B cell (primary cell): ENCODE measurements at regions of chr1 and their contacts with region 1.

Region 1: GRCh38 chr1:25858906-25859789 is at the start of gene AUNIP:
- DNase-seq: peak; percentile 93
- ATAC-seq: peak; percentile 99
- H3K4me3 ChIP-seq: peak within 1 kb of the TSS; percentile 65 to 91 (median 77)
- H3K4me3 Mint-ChIP-seq: peak within 1 kb of the TSS; percentile 96
- H3K27ac ChIP-seq: peak within 1 kb of the TSS; percentile 76 to 86
- H3K27ac Mint-ChIP-seq: peak within 1 kb of the TSS; percentile 95
- H3K4me1 ChIP-seq: peaks cover 22 to 30% of the 10 kb centered on the region in 2 donors
- H3K4me1 Mint-ChIP-seq: peaks cover 26% of the 10 kb centered on the region
- H3K27me3 ChIP-seq: no peaks in the 10 kb centered on the region
- H3K27me3 Mint-ChIP-seq: no peaks in the 10 kb centered on the region
- CTCF ChIP-seq: no peak
- total RNA-seq, gene AUNIP: 0.27 TPM in 1 of 2 replicates, not detected in the other

Region 2: DNA sequence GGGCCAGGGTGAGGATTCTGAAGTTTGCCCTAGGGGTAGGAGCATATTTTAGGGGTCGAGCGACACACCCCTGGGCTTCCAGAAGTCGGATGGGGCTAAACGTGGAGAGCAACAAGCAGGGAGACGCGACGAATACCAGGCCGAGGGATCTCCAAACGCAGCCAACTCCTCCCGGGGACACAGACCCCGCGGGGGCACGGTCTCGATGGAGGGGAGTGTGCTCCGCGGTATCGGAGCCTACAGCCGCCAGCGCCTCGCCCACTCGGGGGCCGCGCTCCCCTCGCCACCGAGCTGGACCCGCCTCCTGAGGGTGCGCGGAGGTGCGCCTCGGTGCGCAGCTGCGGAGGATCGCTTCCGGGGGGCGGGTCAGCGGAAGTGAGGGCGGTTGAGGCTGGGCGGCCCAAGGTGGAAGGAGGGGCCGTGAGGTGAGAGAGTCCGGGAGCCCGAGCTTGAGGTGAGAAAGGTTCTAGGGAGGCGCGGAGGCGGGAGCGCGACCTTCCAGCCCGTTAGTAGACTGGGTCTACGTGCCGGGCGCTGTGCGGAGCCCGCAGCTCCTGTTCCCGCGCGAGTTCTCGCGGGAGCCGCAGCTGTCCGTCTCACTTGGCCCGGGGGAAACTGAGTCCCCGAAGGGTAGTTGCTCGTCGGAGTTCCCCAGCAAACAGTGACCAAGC is 39.4 kb before region 1 on chr1 and contains the start of gene MTFR1L:
- CTCF ChIA-PET with region 1: no interaction called
- POLR2A ChIA-PET with region 1: interaction called, 8 read pairs
- intact Hi-C with region 1: loop called (anchors 1 kb)
- DNase-seq: peak; percentile 94
- ATAC-seq: peak; percentile 93
- H3K4me3 ChIP-seq: peak within 1 kb of the TSS; percentile 66 to 99 (median 84)
- H3K4me3 Mint-ChIP-seq: peak within 1 kb of the TSS; percentile 95
- H3K27ac ChIP-seq: peak within 1 kb of the TSS; percentile 76 to 84
- H3K27ac Mint-ChIP-seq: peak within 1 kb of the TSS; percentile 94
- H3K4me1 ChIP-seq: peaks cover 18 to 24% of the 10 kb centered on the region in 2 donors
- H3K4me1 Mint-ChIP-seq: peaks cover 29% of the 10 kb centered on the region
- H3K27me3 ChIP-seq: no peaks in the 10 kb centered on the region
- H3K27me3 Mint-ChIP-seq: no peaks in the 10 kb centered on the region
- CTCF ChIP-seq: no peak
- total RNA-seq, gene MTFR1L: 40.9 and 41.5 TPM in 2 replicates

Region 3: GRCh38 chr1:25837262-25837875 is 21.8 kb before region 1 on chr1:
- CTCF ChIA-PET with region 1: no interaction called
- POLR2A ChIA-PET with region 1: no interaction called
- intact Hi-C with region 1: no loop called
- DNase-seq: no peak
- ATAC-seq: no peak
- H3K4me3 ChIP-seq: no peak overlapping the region
- H3K4me3 Mint-ChIP-seq: no peak overlapping the region
- H3K27ac ChIP-seq: no peak overlapping the region
- H3K27ac Mint-ChIP-seq: no peak overlapping the region
- H3K4me1 ChIP-seq: no peaks in the 10 kb centered on the region
- H3K4me1 Mint-ChIP-seq: no peaks in the 10 kb centered on the region
- H3K27me3 ChIP-seq: no peaks in the 10 kb centered on the region
- H3K27me3 Mint-ChIP-seq: no peaks in the 10 kb centered on the region
- CTCF ChIP-seq: peak; percentile 25

Region 4: GRCh38 chr1:25874934-25875855 is 16.0 kb after region 1 on chr1 and contains the start of gene PAQR7:
- CTCF ChIA-PET with region 1: interaction called, 4 read pairs
- POLR2A ChIA-PET with region 1: no interaction called
- intact Hi-C with region 1: loop called (anchors 1 kb)
- DNase-seq: peak; percentile 70
- ATAC-seq: peak; percentile 87
- H3K4me3 ChIP-seq: peak within 1 kb of the TSS in 4 of 5 experiments; percentile 50 to 70 (median 62)
- H3K4me3 Mint-ChIP-seq: peak within 1 kb of the TSS; percentile 90
- H3K27ac ChIP-seq: peak within 1 kb of the TSS in 1 of 2 donors; percentile 40
- H3K27ac Mint-ChIP-seq: peak within 1 kb of the TSS; percentile 78
- H3K4me1 ChIP-seq: peaks cover 21 to 41% of the 10 kb centered on the region in 2 donors
- H3K4me1 Mint-ChIP-seq: peaks cover 20% of the 10 kb centered on the region
- H3K27me3 ChIP-seq: no peaks in the 10 kb centered on the region
- H3K27me3 Mint-ChIP-seq: no peaks in the 10 kb centered on the region
- CTCF ChIP-seq: no peak
- total RNA-seq, gene PAQR7: 5.5 and 6.6 TPM in 2 replicates

Region 5: DNA sequence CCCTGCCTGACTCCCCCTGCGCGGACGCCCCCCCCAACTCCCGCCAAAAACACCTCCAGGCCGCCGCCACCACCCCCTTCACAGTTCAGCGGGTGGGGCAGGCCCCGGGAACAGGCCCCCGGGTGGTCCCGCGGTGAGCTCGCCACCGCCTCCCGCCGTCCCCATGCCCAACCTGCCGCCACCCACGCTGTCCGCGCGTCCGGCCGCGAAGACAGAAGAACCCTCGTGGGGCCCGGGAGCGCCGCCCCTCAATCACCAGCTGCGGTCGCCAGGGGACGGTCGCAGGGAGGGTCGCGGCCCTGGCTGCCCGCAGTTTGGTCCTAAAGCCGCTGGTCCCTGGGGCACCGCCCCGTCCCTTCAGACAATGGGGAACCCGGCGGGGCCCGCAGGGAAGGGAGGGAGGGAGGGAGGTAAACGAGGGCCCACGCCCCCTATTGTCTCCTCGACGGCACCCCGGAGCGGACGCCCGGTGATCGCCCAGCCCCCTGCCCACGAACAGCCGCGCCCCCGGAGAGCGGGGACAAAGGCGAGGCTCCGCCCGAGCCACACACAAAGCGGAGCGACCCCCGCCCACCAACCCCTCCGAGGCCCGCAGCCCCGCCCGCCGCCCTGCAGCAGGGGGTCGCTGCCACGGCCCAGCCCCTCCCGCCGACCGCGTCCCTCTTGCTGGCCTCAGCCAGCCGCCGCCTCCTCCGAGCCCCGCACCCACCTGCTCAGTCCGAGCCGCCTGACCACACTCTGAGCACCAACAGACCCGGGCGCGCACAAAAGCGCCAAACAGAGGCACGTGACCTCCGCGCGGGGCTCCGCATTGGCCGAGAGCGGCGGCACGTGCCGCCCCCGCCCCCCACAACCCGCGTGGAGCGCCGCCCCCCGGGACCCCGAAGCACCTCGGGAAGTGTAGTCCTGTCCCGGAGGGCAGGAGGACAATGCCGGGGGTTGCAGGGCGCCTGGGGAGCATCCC is 46.8 kb after region 1 on chr1 and contains the start of gene STMN1:
- CTCF ChIA-PET with region 1: interaction called, 4 read pairs
- POLR2A ChIA-PET with region 1: no interaction called
- intact Hi-C with region 1: loop called (anchors 1 kb)
- DNase-seq: peak; percentile 93
- ATAC-seq: peak; percentile 75
- H3K4me3 ChIP-seq: peak within 1 kb of the TSS; percentile 62 to 99 (median 63)
- H3K4me3 Mint-ChIP-seq: peak within 1 kb of the TSS; percentile 88
- H3K27ac ChIP-seq: peak within 1 kb of the TSS; percentile 62 to 65
- H3K27ac Mint-ChIP-seq: peak within 1 kb of the TSS; percentile 94
- H3K4me1 ChIP-seq: peaks cover 6 to 22% of the 10 kb centered on the region in 2 donors
- H3K4me1 Mint-ChIP-seq: peaks cover 14% of the 10 kb centered on the region
- H3K27me3 ChIP-seq: no peaks in the 10 kb centered on the region
- H3K27me3 Mint-ChIP-seq: no peaks in the 10 kb centered on the region
- CTCF ChIP-seq: no peak
- total RNA-seq, gene STMN1: 42.2 and 48.0 TPM in 2 replicates